Activated CD8-positive, alpha-beta T cell treated with anti-CD3 and anti-CD28 coated beads for 36 hours (primary cell): ENCODE measurements at regions of chr9 and their contacts with region 1.

Region 1: DNA sequence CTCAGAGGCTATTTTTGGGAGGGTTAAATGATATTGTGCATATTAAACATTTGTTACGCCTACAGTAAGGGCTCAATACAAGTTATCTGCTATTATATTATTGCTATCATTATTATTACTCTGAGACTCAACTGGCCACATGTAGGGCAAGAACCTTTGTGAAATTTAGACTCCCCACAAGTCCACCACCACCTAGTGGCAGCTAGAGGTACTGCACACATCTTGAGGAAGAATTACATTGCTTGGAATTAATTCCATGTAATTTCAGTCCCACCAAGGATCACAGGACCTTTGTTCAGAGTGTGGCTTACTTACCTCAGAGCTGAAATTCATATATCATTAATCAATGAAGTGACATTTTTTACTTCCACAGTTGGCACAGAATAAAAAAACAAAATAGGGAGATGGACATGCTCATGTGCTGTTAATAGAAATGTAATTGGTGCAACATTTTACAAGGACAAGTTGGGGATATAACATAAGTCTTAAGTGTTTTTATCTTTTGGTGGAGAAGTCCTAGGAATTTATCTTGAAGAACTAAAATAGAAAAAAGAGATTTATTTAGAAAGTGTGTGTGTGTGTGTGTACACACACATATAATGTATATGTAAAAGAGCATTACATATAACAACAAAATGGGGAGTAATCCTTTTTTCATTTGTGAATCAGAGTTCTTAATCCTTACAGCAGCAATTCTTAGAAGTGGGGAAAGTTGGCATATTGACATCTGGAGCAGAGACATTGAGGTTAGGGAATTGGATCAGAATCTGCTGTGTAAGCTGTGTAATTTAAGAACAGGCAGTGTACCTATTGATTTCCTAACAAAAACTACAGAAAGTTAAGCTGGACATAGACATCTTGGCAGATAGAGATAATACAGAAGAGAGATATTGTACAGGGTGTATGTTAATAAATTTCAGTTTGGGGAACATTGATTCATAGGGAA is 11.2 kb downstream of the MSANTD3 start:
- DNase-seq: peak; percentile 82
- ATAC-seq: peak; percentile 88
- H3K4me3 Mint-ChIP-seq: no peak overlapping the region
- H3K27ac Mint-ChIP-seq: no peak overlapping the region
- H3K4me1 Mint-ChIP-seq: no peaks in the 10 kb centered on the region
- H3K27me3 Mint-ChIP-seq: no peaks in the 10 kb centered on the region
- CTCF ChIP-seq: peak; percentile 87

Region 2: DNA sequence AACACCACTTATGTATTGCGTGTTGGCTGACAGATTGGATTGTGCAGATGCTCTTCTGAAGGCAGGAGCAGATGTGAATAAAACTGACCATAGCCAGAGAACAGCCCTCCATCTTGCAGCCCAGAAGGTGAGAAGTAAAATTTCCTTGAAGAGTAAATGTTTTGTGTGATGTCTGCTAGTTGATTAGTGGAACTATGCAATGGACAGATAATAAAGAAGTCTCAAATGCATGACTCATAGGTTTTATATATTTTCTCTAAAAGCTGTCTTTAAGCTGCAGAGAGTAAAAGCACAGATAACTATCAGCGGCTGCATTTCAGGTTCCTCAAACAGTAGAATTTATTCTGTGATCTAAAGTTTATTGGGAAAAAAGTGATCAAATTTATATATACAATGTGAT is 311.7 kb before region 1 on chr9:
- CTCF ChIA-PET with region 1: no interaction called
- POLR2A ChIA-PET with region 1: no interaction called
- intact Hi-C with region 1: no loop called
- DNase-seq: no peak
- ATAC-seq: no peak
- H3K4me3 Mint-ChIP-seq: no peak overlapping the region
- H3K27ac Mint-ChIP-seq: no peak overlapping the region
- H3K4me1 Mint-ChIP-seq: no peaks in the 10 kb centered on the region
- H3K27me3 Mint-ChIP-seq: no peaks in the 10 kb centered on the region
- CTCF ChIP-seq: no peak

Region 3: DNA sequence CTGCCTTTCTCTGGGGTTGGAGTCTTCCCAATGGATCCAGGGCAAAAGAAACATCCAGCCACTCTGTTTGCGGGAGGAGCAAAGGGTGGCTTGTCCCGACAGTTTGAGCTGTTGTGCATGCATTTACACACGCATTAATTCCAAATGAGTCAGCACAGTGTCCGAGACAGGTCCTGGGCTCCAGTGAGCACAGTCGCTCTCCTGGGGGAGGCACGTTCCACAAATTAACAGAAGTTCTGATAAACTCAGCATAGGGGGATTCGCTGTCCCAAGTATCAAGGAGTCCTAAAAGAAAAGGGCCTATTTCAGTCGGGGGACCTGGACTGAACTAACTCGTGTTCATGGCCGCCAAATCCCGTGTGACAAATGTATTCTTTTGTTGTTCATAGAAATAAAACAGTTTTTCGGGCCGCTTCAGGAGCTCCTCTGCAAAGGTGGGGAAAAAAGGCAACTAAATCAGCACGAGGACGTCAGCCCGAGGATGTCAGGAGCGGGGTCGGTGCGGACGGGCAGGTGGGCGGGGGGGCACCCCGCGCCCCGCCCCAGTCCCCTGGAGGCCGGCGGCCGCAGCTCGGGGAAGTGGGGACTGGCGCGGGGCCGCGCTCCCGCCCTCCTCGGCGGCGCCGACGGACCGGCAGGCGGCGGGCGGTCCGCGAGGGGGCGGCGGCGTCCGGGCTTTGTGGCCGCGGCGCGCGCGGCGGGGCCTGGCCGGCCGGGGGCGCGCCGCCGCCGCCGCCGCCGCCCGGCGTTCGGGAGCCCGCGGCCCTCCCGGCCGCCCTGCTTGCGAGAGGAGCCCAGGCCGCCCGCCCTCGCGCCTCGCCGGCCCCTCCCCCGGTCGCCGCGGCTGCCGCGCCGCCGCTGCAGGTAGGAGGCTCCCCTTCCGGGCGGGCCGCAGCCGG is 11.4 kb before region 1 on chr9 and contains the start of gene MSANTD3:
- CTCF ChIA-PET with region 1: interaction called, 32 read pairs
- POLR2A ChIA-PET with region 1: interaction called, 4 read pairs
- intact Hi-C with region 1: no loop called
- DNase-seq: peak; percentile 57
- ATAC-seq: peak; percentile 80
- H3K4me3 Mint-ChIP-seq: peak within 1 kb of the TSS; percentile 89
- H3K27ac Mint-ChIP-seq: peak within 1 kb of the TSS; percentile 95
- H3K4me1 Mint-ChIP-seq: peaks cover 33% of the 10 kb centered on the region
- H3K27me3 Mint-ChIP-seq: peaks cover 3% of the 10 kb centered on the region
- CTCF ChIP-seq: no peak
- total RNA-seq, gene MSANTD3: 13.3 to 14.6 TPM

Region 4: DNA sequence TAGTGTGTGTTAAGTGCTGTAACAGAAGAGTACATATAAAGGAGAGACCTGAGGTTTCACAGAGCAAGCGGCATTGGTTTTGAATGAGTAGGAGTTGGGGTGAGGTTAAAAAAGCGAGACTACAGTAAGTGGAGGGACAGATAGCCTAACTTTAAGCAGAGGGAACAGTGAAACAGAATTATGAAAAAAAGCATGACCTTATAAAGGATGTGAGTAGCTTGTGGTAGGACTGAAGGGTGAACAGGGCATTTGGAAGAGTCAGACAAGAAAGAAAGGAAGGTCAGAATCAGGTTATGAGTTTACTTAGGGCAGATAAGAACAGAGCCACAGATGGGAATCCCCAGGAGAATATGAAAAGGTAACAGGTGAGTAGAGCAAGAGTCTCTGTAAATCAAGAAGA is 11.3 kb after region 1 on chr9:
- CTCF ChIA-PET with region 1: interaction called, 23 read pairs
- POLR2A ChIA-PET with region 1: no interaction called
- intact Hi-C with region 1: no loop called
- DNase-seq: no peak
- ATAC-seq: peak; percentile 74
- H3K4me3 Mint-ChIP-seq: no peak overlapping the region
- H3K27ac Mint-ChIP-seq: no peak overlapping the region
- H3K4me1 Mint-ChIP-seq: peaks cover 8% of the 10 kb centered on the region
- H3K27me3 Mint-ChIP-seq: no peaks in the 10 kb centered on the region
- CTCF ChIP-seq: no peak